ENCODE measurements at regions of chr9 and their contacts with region 1.

Region 1: GRCh38 chr9:15306757-15307534 is at the start of gene TTC39B:
- DNase-seq: peak; percentile 96 to 98
- ATAC-seq: peak; percentile 98
- H3K4me3 ChIP-seq: peak within 1 kb of the TSS; percentile 75 to 80
- H3K27ac ChIP-seq: peak within 1 kb of the TSS; percentile 34 to 68
- H3K4me1 ChIP-seq: no peaks in the 10 kb centered on the region
- H3K27me3 ChIP-seq: no peaks in the 10 kb centered on the region
- total RNA-seq, gene TTC39B: 35.2 to 40.8 TPM

Region 2: DNA sequence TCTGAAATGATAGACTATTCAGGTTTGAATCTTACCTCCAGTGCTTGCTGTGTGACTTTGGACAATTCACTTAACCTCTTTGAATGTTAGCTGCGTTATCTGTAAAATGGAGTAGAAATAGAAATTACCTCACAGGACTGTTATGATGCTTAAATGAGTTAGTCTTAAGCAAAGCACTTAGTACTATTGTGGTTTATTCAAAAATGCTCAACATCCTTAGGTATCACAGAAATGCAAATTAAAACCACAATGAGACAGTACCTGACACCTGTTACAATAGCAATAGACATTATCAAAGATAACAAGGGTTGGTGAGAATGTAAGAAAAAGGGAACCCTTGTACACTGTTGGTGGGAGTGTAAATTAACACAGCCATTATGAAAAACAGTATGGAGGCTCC is 319.1 kb before region 1 on chr9:
- intact Hi-C with region 1: no loop called
- DNase-seq: no peak
- ATAC-seq: no peak
- H3K4me3 ChIP-seq: no peak overlapping the region
- H3K27ac ChIP-seq: no peak overlapping the region
- H3K4me1 ChIP-seq: no peaks in the 10 kb centered on the region
- H3K27me3 ChIP-seq: no peaks in the 10 kb centered on the region

Region 3: DNA sequence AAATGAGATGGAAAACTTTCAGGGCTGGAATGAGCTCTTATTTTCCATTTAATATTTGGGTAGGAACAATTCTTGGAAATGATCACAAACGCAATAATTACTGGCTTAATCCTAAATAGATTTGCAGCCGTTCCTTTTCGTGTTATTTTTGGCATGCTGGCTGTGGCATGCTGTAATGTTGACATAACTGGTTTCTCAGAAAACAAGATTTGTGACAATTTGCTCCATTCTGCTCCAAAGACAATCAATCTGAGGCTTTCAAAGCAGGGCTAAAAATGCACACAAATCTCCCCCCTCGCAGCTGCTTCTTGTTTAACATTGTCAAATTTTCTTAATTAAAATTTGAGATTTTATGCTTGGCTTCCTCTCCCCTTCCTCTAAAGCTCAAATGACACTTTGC is 151.1 kb before region 1 on chr9:
- intact Hi-C with region 1: loop called in 1 of 2 experiments (anchors 10 kb)
- DNase-seq: peak in 1 of 2 donors; percentile 70
- ATAC-seq: peak; percentile 85
- H3K4me3 ChIP-seq: no peak overlapping the region
- H3K27ac ChIP-seq: peak overlapping the region in 1 of 2 donors; percentile 77
- H3K4me1 ChIP-seq: peaks cover 16 to 19% of the 10 kb centered on the region in 2 donors
- H3K27me3 ChIP-seq: no peaks in the 10 kb centered on the region

Region 4: DNA sequence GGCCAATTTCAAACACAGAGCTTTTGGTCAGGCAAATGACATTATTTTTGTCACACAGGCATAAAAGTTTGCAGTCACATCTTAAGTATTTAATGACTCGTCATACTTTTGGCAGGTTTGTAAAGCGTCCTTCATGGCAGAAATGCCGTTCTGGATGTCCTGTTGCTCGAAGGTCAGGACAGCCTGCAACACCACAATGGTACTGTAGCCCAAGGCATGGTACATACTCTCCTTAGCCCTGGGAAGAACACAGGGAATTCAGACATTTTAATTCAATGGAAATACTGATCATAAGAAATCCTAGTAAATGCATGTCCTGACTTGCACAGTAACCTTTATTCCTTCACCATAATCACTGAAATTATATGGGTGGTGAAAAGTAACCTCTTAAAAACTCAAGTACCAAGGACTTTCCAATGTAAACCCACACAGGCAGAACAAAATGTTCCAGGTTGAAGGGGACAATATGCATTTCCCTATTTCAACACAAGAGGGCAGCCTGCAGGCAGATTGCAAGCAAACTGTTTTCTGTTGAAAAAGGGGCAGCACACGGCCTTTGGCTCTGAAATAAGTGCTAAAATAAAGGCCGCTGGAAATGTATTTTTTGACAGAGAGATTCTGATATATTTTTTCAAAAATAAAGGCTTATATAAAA is 95.7 kb before region 1 on chr9:
- intact Hi-C with region 1: loop called in 1 of 2 experiments (anchors 5 kb)
- DNase-seq: peak in 1 of 2 donors; percentile 46
- ATAC-seq: peak; percentile 89
- H3K4me3 ChIP-seq: peak overlapping the region in 1 of 2 donors; percentile 16
- H3K27ac ChIP-seq: peak overlapping the region; percentile 46 to 84
- H3K4me1 ChIP-seq: peaks cover 0 to 7% of the 10 kb centered on the region in 2 donors
- H3K27me3 ChIP-seq: no peaks in the 10 kb centered on the region

Region 5: DNA sequence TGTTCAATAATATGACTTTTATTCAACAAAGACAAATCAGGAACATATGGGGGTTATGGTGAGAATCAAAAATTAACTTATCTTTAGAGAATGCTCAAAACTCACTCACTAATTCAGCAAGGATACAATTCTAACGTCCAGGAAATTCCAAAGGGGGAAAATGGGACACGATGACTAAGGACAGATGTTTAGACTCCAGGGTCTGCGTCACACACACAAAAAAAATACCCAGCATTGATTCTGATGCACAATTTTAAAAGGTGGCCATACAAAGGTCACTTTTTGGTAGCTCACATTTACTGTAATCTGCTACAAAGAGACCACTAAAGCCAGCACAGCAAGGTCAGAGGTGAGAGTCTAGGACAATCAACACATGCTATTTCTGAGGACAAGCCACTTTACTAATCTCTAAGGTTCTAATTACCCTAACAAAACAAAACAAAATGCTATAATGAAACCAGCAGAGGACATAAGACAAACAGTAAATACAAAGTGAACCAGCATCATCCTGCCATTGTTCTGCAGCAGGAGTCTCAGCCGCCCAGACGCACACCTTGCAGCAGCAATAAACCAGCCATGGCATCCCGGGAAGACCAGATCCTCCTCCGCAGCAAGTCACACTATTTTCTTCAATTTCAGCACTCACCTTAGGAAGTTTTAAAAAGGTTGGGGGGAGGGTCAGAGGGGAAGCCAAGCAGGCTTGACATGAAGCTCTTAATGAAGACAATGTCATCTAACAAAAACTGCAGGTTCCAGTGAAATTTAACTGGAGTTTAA is 57.7 kb before region 1 on chr9:
- intact Hi-C with region 1: loop called in 1 of 2 experiments (anchors 2 kb)
- DNase-seq: no peak
- ATAC-seq: peak; percentile 47
- H3K4me3 ChIP-seq: peak overlapping the region; percentile 21 to 30
- H3K27ac ChIP-seq: peak overlapping the region; percentile 53 to 77
- H3K4me1 ChIP-seq: peaks cover under 1 to 19% of the 10 kb centered on the region in 2 donors
- H3K27me3 ChIP-seq: no peaks in the 10 kb centered on the region

Region 6: DNA sequence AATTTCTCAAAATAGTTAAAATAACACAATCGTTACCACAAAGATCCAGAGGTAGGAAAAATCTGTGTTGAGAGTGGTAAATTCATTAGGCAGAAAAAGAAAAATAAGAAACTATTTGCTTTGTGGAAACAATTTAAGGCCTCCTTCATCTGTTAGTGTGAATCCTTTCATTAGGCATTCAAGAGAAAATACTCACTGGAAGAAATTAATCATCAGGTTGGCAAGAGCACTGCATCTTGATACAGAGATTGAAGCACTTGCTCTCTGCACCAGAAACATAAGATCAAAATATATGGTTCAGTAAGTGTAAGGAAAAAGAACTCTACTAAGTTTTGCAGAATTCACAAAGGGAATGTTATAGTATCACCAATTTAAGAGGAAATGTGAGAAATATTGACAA is 44.4 kb before region 1 on chr9:
- intact Hi-C with region 1: loop called in 1 of 2 experiments (anchors 5 kb)
- DNase-seq: no peak
- ATAC-seq: no peak
- H3K4me3 ChIP-seq: no peak overlapping the region
- H3K27ac ChIP-seq: peak overlapping the region in 1 of 2 donors; percentile 88
- H3K4me1 ChIP-seq: peaks cover 0 to 13% of the 10 kb centered on the region in 2 donors
- H3K27me3 ChIP-seq: no peaks in the 10 kb centered on the region

Region 7: GRCh38 chr9:15403155-15403554 is 96.2 kb after region 1 on chr9:
- intact Hi-C with region 1: loop called in 1 of 2 experiments (anchors 5 kb)
- DNase-seq: no peak
- ATAC-seq: no peak
- H3K4me3 ChIP-seq: no peak overlapping the region
- H3K27ac ChIP-seq: no peak overlapping the region
- H3K4me1 ChIP-seq: peaks cover 0 to 2% of the 10 kb centered on the region in 2 donors
- H3K27me3 ChIP-seq: no peaks in the 10 kb centered on the region

Region 8: GRCh38 chr9:15422372-15423230 is 115.7 kb after region 1 on chr9 and contains the start of gene SNAPC3:
- intact Hi-C with region 1: loop called in 1 of 2 experiments (anchors 5 kb)
- DNase-seq: peak; percentile 96 to 98
- ATAC-seq: peak; percentile 100
- H3K4me3 ChIP-seq: peak within 1 kb of the TSS; percentile 61 to 79
- H3K27ac ChIP-seq: peak within 1 kb of the TSS in 1 of 2 donors; percentile 96
- H3K4me1 ChIP-seq: no peaks in the 10 kb centered on the region
- H3K27me3 ChIP-seq: no peaks in the 10 kb centered on the region
- total RNA-seq, gene SNAPC3: 29.5 to 48.9 TPM